Heart left ventricle (tissue), 16 donors: ENCODE measurements at regions of chr10 and their contacts with region 1.

Region 1: DNA sequence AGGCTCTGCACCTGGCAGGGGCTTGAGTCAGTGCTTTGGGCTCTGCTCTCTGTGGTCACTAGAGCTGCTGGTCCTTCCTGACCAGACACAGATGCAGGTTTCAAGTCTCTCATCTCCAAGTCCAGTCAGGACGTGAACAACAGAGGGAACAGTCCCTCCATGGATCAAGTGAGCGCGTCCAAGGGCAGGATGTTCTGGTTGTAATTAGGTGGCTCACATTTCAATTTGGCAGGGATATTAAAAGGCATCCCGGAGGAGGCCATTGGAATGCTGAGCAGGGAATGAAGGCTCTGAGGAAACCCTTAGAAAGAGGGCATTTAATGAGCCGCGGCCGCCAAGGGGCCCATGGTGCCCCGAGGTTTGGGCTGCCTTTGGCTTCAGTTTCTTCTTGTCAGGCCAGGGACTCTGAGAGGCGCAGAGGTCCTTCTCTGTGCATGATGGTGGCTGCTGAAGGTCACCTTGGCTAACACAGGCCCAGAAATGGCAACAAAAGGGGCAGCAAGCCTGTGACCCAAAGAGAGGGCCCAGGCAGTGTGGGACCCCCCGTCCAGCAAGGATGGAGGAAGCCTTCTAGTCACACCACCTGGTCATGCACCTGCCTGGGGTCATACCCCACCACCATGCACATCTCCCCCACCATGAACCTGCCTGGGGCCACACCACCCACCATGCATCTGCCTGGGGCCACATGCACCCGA is 30.7 kb upstream of the INPP5A start:
- DNase-seq: peak in 2 of 5 donors; percentile 25 to 46
- ATAC-seq: peak; percentile 9 to 32 (median 16)
- H3K4me3 ChIP-seq: no peak overlapping the region
- H3K27ac ChIP-seq: peak overlapping the region in 10 of 12 donors; percentile 4 to 78 (median 50)
- H3K4me1 ChIP-seq: peaks cover 0 to 65% (median 27%) of the 10 kb centered on the region in 12 donors
- H3K27me3 ChIP-seq: no peaks in the 10 kb centered on the region
- CTCF ChIP-seq: no peak
- POLR2A ChIP-seq: no peak

Region 2: GRCh38 chr10:132458593-132459300 is 48.1 kb before region 1 on chr10:
- intact Hi-C with region 1: loop called in 3 of 10 experiments (anchors 2 to 5 kb)
- DNase-seq: peak; percentile 51 to 85 (median 61)
- ATAC-seq: peak; percentile 40 to 67 (median 58)
- H3K4me3 ChIP-seq: no peak overlapping the region
- H3K27ac ChIP-seq: no peak overlapping the region
- H3K4me1 ChIP-seq: peaks cover 0 to 32% (median 22%) of the 10 kb centered on the region in 12 donors
- H3K27me3 ChIP-seq: peaks cover 0 to 10% (median 0%) of the 10 kb centered on the region in 9 donors
- CTCF ChIP-seq: peak; percentile 88 to 99 (median 96)
- POLR2A ChIP-seq: no peak

Region 3: GRCh38 chr10:132464253-132465192 is 42.3 kb before region 1 on chr10:
- intact Hi-C with region 1: loop called in 7 of 10 experiments (anchors 2 to 5 kb)
- DNase-seq: peak; percentile 81 to 95 (median 90)
- ATAC-seq: peak; percentile 80 to 87 (median 84)
- H3K4me3 ChIP-seq: peak overlapping the region in 1 of 12 donors; percentile 7
- H3K27ac ChIP-seq: peak overlapping the region; percentile 84 to 99 (median 97)
- H3K4me1 ChIP-seq: peaks cover 0 to 80% (median 42%) of the 10 kb centered on the region in 12 donors
- H3K27me3 ChIP-seq: no peaks in the 10 kb centered on the region
- CTCF ChIP-seq: no peak
- POLR2A ChIP-seq: no peak

Region 4: GRCh38 chr10:132571650-132572535 is 65.0 kb after region 1 on chr10:
- intact Hi-C with region 1: loop called in 1 of 10 experiments (anchors 10 kb)
- DNase-seq: peak in 4 of 5 donors; percentile 61 to 87 (median 70)
- ATAC-seq: peak; percentile 81 to 94 (median 88)
- H3K4me3 ChIP-seq: no peak overlapping the region
- H3K27ac ChIP-seq: peak overlapping the region in 7 of 12 donors; percentile 20 to 72 (median 55)
- H3K4me1 ChIP-seq: peaks cover 14 to 56% (median 44%) of the 10 kb centered on the region in 12 donors
- H3K27me3 ChIP-seq: no peaks in the 10 kb centered on the region
- CTCF ChIP-seq: no peak
- POLR2A ChIP-seq: no peak

Region 5: DNA sequence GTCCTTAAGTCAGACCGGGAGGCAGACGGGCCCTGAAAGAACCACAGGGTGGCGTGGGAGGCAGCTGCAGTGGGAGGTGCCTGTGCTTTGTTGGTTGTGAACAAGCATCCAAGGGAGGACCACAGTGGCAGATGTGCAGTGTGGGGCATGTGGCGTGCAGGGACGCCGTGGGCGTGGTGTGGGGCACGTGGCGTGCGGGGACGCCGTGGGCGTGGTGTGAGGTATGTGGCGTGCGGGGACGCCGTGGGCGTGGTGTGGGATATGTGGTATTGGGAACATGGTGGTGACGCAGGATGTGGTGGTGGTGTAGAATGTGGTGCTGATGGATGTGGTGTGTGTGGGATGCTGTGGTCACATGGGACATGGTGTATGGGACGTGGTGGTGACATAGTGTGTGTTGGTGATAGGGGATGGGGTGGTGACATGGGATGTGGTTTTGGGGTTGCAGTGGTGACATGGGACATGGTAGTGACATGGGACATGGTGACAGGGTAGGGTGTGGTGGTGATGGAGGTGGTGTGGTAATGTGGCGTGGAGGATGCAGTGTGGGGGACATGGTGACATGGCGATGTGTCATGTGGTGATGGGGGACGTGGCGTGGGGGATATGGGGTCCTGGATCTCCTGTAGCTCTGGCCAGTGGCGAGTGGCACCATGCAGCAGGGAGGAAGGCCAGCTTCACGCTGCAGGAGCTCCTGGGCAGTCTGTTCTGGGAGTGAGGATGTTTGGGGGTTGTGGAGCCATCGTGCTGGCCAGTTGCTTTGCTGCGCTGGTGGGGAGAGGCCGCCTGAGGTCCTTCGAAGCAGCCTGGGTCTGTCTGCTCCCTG is 109.5 kb after region 1 on chr10:
- intact Hi-C with region 1: no loop called
- DNase-seq: peak in 2 of 5 donors; percentile 16 to 61
- ATAC-seq: peak in 1 of 4 donors; percentile 3
- H3K4me3 ChIP-seq: no peak overlapping the region
- H3K27ac ChIP-seq: no peak overlapping the region
- H3K4me1 ChIP-seq: peaks cover 0 to 32% (median 2%) of the 10 kb centered on the region in 12 donors
- H3K27me3 ChIP-seq: no peaks in the 10 kb centered on the region
- CTCF ChIP-seq: no peak
- POLR2A ChIP-seq: no peak

Region 6: DNA sequence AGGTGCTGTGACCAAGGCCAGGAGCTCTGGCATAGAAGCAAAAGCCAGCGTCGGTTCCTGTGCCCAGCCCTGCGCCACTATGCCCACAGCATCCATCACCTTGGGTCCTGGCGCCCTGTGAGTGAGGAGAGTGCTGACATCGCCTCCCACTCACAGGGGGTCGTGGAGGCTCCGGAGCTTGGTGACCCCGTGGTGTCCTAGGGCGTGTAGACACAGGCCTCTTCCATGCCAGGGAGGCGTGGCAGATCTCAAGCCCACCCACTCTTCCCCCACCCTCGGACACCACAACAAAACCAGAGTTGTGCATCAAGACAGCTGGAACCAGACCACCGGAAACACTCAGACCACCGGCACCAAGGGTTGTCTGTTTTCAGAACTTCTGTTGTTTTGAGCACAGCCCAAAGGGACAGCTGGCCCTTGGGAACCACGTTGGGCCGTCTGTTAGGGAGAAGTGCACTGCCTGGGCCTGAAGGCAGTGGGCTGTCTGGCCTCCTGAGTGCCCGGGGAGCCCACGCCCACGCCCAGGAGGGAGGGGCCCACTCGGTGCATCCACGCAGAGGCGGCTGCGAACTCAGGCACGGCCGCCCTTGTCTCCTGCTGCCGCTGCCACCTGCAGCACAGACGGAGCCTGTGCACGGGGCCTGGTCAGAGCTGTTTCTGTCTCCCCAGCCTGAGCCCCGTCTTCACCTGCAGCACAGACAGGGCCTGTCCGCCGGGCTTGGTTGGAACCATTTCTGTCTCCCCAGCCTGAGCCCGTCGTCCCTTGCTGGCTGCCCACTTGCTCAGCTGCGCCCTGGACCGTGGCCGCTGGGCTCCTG is 137.1 kb after region 1 on chr10:
- intact Hi-C with region 1: loop called in 4 of 10 experiments (anchors 2 to 10 kb)
- DNase-seq: peak in 1 of 5 donors; percentile 50
- ATAC-seq: peak in 3 of 4 donors; percentile 4 to 11 (median 10)
- H3K4me3 ChIP-seq: no peak overlapping the region
- H3K27ac ChIP-seq: no peak overlapping the region
- H3K4me1 ChIP-seq: peaks cover 0 to 19% (median 1%) of the 10 kb centered on the region in 12 donors
- H3K27me3 ChIP-seq: no peaks in the 10 kb centered on the region
- CTCF ChIP-seq: no peak
- POLR2A ChIP-seq: no peak

Region 7: DNA sequence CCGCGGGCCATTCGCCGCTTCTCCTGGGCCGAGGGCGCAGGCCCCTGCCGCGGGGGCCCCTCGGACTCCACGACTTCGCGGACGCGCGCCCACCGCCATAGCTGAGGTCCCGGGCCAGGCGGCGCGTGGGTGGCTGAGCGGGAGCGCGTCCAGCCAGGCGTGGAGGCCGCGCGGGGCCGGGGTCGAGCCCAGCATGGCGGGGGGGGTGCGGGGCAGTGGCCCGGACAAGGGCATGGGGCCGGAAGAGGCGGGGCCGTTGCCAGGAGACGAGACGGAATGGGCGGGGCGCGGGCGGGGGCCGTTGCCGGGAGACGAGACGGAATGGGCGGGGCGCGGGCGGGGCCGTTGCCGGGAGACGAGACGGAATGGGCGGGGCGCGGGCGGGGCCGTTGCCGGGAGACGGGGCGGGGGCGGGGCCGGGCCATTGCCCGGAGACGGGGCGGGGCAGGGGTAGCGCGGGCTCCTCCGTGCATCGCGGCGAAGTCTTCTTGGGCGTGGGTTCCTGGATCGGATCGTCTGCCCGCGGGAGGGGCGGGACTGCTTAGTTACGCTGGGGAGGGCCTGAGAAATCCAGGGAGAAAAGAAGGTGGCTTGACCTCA is 755.0 kb after region 1 on chr10:
- intact Hi-C with region 1: no loop called
- DNase-seq: peak; percentile 88 to 95 (median 91)
- ATAC-seq: peak; percentile 62 to 88 (median 76)
- H3K4me3 ChIP-seq: peak overlapping the region; percentile 49 to 85 (median 77)
- H3K27ac ChIP-seq: peak overlapping the region; percentile 77 to 96 (median 89)
- H3K4me1 ChIP-seq: peaks cover 5 to 69% (median 37%) of the 10 kb centered on the region in 12 donors
- H3K27me3 ChIP-seq: no peaks in the 10 kb centered on the region
- CTCF ChIP-seq: no peak
- POLR2A ChIP-seq: peak in 1 of 2 donors; percentile 67